Activated naive CD4-positive, alpha-beta T cell treated with anti-CD3 and anti-CD28 coated beads for 36 hours (primary cell): ENCODE measurements at regions of chr2 and their contacts with region 1.

Region 1: DNA sequence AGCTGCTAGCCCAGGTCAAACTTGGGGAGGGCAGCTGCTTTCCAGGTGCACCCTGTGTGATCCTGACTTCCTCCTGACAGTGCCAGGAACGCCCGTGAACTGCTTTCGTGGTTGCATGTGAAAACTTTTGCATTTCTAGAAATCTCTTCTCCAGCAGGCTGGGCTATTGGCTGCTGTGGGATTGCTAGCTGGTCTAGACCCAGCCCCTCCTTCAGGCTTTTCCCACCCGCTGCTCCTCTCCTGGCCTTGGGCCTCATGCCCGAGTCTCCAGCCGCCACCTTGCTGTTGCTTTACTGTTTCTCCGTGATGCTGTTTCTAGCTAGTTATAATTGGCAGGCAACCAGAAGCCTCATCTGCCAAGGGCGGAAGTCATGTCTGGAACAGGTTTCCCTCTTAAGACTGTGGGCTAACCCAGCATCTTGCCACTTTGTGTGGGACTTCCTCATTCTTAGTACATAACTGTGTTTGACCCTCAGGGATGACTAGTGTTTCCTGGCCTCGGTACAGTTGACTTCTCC is 27.0 kb upstream of the MGAT4A start:
- DNase-seq: peak; percentile 76
- H3K4me3 Mint-ChIP-seq: peak overlapping the region; percentile 59
- H3K27ac Mint-ChIP-seq: peak overlapping the region; percentile 86
- H3K4me1 Mint-ChIP-seq: peaks cover 52% of the 10 kb centered on the region
- H3K27me3 Mint-ChIP-seq: no peaks in the 10 kb centered on the region

Region 2: DNA sequence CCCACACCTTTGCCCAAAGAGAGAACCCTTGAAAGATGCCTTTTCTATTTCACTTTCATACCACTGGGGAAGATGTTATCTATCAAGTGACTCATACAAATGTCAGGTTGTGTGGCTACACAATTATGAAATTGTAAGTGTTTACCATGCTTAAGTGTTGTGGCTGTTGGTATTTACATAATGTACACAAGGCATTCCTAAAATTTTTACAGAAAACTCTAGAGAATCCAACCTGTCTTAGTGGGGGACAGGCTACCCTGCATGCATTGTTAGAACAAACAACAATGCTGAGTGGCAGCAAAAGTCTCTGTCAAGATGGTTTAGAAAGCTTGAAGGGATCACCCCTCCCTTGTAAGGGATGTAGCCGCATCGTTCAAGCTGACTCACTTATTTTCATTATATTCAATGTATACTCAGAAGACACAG is 21.5 kb before region 1 on chr2:
- CTCF ChIA-PET with region 1: interaction called, 4 read pairs
- intact Hi-C with region 1: loop called (anchors 1 kb)
- DNase-seq: peak; percentile 65
- H3K4me3 Mint-ChIP-seq: peak overlapping the region; percentile 25
- H3K27ac Mint-ChIP-seq: peak overlapping the region; percentile 41
- H3K4me1 Mint-ChIP-seq: peaks cover 75% of the 10 kb centered on the region
- H3K27me3 Mint-ChIP-seq: no peaks in the 10 kb centered on the region

Region 3: GRCh38 chr2:98746426-98746825 is 11.5 kb before region 1 on chr2:
- CTCF ChIA-PET with region 1: interaction called, 5 read pairs
- intact Hi-C with region 1: loop called (anchors 1 kb)
- DNase-seq: no peak
- H3K4me3 Mint-ChIP-seq: no peak overlapping the region
- H3K27ac Mint-ChIP-seq: no peak overlapping the region
- H3K4me1 Mint-ChIP-seq: peaks cover 48% of the 10 kb centered on the region
- H3K27me3 Mint-ChIP-seq: no peaks in the 10 kb centered on the region